Activated CD4-positive, alpha-beta memory T cell treated with anti-CD3 and anti-CD28 coated beads for 36 hours (primary cell): ENCODE measurements at regions of chr2 and their contacts with region 1.

Region 1: DNA sequence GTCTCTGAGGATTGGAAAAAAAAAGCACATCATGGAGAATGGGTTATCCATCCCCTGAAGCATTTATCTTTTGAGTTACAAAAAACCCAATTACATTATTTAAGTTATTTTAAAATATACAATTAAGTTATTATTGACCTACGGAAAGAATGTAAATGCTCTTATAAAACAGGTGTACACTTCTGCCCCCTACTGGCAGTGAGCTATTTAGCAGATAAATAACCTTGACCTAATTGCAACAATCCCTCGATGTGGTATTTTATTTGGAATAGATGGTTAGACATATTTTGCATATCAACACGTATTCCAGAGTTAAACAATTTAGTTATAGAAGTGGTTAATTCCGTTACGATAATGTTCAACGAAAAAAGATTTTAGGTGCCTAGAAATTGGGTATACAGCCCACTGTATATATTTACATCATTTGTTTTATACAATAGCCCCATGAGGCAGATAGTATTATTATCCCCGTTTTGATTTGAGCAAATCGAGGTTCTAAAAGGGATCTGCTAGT is 9.1 kb upstream of the DAW1 start:
- DNase-seq: no peak
- H3K4me3 Mint-ChIP-seq: no peak overlapping the region
- H3K27ac Mint-ChIP-seq: no peak overlapping the region
- H3K4me1 Mint-ChIP-seq: no peaks in the 10 kb centered on the region
- H3K27me3 Mint-ChIP-seq: no peaks in the 10 kb centered on the region

Region 2: GRCh38 chr2:227774011-227774624 is 88.2 kb before region 1 on chr2:
- CTCF ChIA-PET with region 1: interaction called, 29 read pairs
- POLR2A ChIA-PET with region 1: interaction called, 3 read pairs
- intact Hi-C with region 1: loop called (anchors 1 kb)
- DNase-seq: peak; percentile 37
- H3K4me3 Mint-ChIP-seq: no peak overlapping the region
- H3K27ac Mint-ChIP-seq: peak overlapping the region; percentile 50
- H3K4me1 Mint-ChIP-seq: peaks cover 16% of the 10 kb centered on the region
- H3K27me3 Mint-ChIP-seq: no peaks in the 10 kb centered on the region

Region 3: DNA sequence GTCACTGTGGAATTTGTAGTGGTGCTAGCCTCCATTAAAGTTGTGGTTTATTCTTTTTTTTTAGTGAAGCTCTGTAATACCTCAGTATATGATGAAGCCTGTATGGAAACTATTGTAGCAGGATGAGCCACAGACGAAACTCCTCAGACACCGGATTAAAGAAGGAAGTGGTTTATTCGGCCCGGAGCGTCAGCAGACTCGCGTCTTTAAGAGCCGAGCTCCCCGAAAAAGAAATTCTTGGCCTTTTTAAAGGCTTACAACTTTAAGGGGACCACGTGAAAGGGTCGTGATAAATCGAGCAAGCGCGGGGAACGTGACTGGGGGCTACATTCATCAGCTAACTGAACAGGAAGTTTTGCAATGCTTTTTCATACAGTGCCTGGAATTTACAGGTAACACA is 56.7 kb before region 1 on chr2:
- CTCF ChIA-PET with region 1: interaction called, 15 read pairs
- POLR2A ChIA-PET with region 1: no interaction called
- intact Hi-C with region 1: no loop called
- DNase-seq: peak; percentile 66
- H3K4me3 Mint-ChIP-seq: peak overlapping the region; percentile 72
- H3K27ac Mint-ChIP-seq: peak overlapping the region; percentile 81
- H3K4me1 Mint-ChIP-seq: peaks cover 14% of the 10 kb centered on the region
- H3K27me3 Mint-ChIP-seq: peaks cover 1% of the 10 kb centered on the region

Region 4: GRCh38 chr2:227834423-227834822 is 27.9 kb before region 1 on chr2:
- CTCF ChIA-PET with region 1: interaction called, 11 read pairs
- POLR2A ChIA-PET with region 1: no interaction called
- intact Hi-C with region 1: no loop called
- DNase-seq: no peak
- H3K4me3 Mint-ChIP-seq: no peak overlapping the region
- H3K27ac Mint-ChIP-seq: no peak overlapping the region
- H3K4me1 Mint-ChIP-seq: no peaks in the 10 kb centered on the region
- H3K27me3 Mint-ChIP-seq: peaks cover 2% of the 10 kb centered on the region

Region 5: DNA sequence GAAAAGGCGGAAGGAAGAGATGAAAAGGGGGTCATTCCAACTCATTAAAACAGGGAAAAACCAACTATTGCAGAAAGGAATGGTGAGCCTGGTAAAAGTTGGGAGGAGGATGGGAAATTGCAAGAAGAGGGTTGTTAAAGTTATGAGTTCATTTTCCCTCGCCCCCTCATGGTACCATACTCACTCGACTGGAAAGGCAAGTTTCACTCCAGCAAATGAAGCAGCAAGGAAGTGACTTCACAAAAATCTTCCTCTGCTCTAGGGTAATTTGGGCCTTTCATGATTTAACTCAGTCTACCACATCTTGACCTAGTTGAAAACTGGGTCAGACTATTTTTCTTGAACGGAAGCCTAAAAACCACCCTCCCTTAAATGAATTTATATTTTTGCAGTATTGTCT is 13.7 kb before region 1 on chr2:
- CTCF ChIA-PET with region 1: interaction called, 6 read pairs
- POLR2A ChIA-PET with region 1: no interaction called
- intact Hi-C with region 1: loop called (anchors 2 kb)
- DNase-seq: peak; percentile 31
- H3K4me3 Mint-ChIP-seq: peak overlapping the region; percentile 55
- H3K27ac Mint-ChIP-seq: peak overlapping the region; percentile 84
- H3K4me1 Mint-ChIP-seq: peaks cover 28% of the 10 kb centered on the region
- H3K27me3 Mint-ChIP-seq: no peaks in the 10 kb centered on the region

Region 6: DNA sequence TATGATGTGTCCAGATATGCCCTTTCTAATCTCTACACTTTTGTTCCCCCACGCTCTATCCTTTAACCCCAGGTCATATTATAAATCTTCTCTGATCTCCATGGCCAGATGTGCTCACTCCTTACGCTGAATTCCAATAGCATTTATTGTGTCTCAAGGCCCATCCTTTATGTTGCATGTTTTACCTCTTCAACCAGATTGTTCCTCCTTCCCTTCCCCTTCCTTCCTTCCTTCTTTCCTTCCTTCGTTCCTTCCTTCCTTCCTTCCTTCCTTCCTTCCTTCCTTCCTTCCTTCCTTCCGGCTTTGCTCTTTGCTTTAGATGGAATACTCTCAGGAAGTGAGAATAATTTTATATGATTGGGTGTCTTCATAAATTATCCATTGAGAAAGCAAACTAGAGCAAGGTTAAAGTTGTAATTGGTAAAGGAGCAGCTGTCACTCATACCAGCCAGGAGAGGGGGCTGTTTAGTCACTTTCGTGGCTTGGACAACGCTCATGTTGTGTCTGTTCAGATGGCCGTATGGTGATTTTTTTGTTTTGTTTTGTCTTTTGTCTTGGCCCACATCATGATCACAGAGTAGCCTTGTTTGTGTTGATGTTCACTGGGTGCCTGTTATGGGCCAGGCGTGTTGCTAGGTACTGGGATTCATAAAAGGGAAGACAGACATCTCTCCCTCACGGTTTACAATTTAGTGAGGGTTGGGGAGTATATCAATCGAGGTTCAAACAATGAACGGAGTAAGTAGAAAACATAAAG is 77.2 kb after region 1 on chr2:
- CTCF ChIA-PET with region 1: no interaction called
- POLR2A ChIA-PET with region 1: no interaction called
- intact Hi-C with region 1: no loop called
- DNase-seq: no peak
- H3K4me3 Mint-ChIP-seq: no peak overlapping the region
- H3K27ac Mint-ChIP-seq: no peak overlapping the region
- H3K4me1 Mint-ChIP-seq: no peaks in the 10 kb centered on the region
- H3K27me3 Mint-ChIP-seq: peaks cover 11% of the 10 kb centered on the region

Region 7: GRCh38 chr2:228180181-228181097 is 318.2 kb after region 1 on chr2:
- CTCF ChIA-PET with region 1: no interaction called
- POLR2A ChIA-PET with region 1: no interaction called
- intact Hi-C with region 1: no loop called
- DNase-seq: no peak
- H3K4me3 Mint-ChIP-seq: no peak overlapping the region
- H3K27ac Mint-ChIP-seq: no peak overlapping the region
- H3K4me1 Mint-ChIP-seq: no peaks in the 10 kb centered on the region
- H3K27me3 Mint-ChIP-seq: peaks cover 12% of the 10 kb centered on the region